ENCODE measurements at regions of chr5 and their contacts with region 1.

Region 1: GRCh38 chr5:157328277-157328912 is 62.5 kb downstream of the CYFIP2 start:
- DNase-seq: peak; percentile 71
- H3K4me3 Mint-ChIP-seq: no peak overlapping the region
- H3K27ac Mint-ChIP-seq: peak overlapping the region; percentile 23
- H3K4me1 Mint-ChIP-seq: peaks cover 40% of the 10 kb centered on the region
- H3K27me3 Mint-ChIP-seq: no peaks in the 10 kb centered on the region

Region 2: GRCh38 chr5:157004893-157005551 is 323.4 kb before region 1 on chr5:
- CTCF ChIA-PET with region 1: no interaction called
- POLR2A ChIA-PET with region 1: no interaction called
- intact Hi-C with region 1: no loop called
- DNase-seq: no peak
- H3K4me3 Mint-ChIP-seq: no peak overlapping the region
- H3K27ac Mint-ChIP-seq: no peak overlapping the region
- H3K4me1 Mint-ChIP-seq: peaks cover 12% of the 10 kb centered on the region
- H3K27me3 Mint-ChIP-seq: no peaks in the 10 kb centered on the region

Region 3: DNA sequence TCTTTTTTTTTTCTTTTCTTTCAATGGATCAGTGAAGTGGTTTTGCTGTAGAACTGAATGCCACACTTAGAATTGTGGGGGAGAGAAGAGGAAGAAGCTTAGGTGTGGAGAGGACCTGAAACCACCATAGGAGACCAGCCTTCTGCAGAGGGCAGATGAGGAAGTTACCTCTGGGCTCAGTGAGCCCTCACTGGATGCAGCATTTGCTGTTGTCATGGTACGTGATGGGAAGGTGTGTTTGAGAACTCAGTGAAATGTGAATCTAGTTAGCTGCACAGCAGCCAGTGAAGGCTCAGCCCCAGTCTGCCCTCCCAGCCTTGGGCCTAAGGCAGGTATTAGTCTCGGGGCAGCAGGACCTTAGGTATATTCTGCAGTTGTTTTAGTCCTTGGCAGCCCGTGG is 45.0 kb before region 1 on chr5:
- CTCF ChIA-PET with region 1: interaction called, 13 read pairs
- POLR2A ChIA-PET with region 1: no interaction called
- intact Hi-C with region 1: no loop called
- DNase-seq: peak; percentile 25
- H3K4me3 Mint-ChIP-seq: no peak overlapping the region
- H3K27ac Mint-ChIP-seq: peak overlapping the region; percentile 77
- H3K4me1 Mint-ChIP-seq: peaks cover 83% of the 10 kb centered on the region
- H3K27me3 Mint-ChIP-seq: no peaks in the 10 kb centered on the region

Region 4: GRCh38 chr5:157312492-157312891 is 15.9 kb before region 1 on chr5:
- CTCF ChIA-PET with region 1: interaction called, 38 read pairs
- POLR2A ChIA-PET with region 1: no interaction called
- intact Hi-C with region 1: no loop called
- DNase-seq: peak; percentile 74
- H3K4me3 Mint-ChIP-seq: no peak overlapping the region
- H3K27ac Mint-ChIP-seq: peak overlapping the region; percentile 82
- H3K4me1 Mint-ChIP-seq: peaks cover 31% of the 10 kb centered on the region
- H3K27me3 Mint-ChIP-seq: no peaks in the 10 kb centered on the region

Region 5: GRCh38 chr5:157390551-157391297 is 62.3 kb after region 1 on chr5:
- CTCF ChIA-PET with region 1: interaction called, 8 read pairs
- POLR2A ChIA-PET with region 1: interaction called, 3 read pairs
- intact Hi-C with region 1: loop called (anchors 2 kb)
- DNase-seq: peak; percentile 91
- H3K4me3 Mint-ChIP-seq: peak overlapping the region; percentile 49
- H3K27ac Mint-ChIP-seq: peak overlapping the region; percentile 98
- H3K4me1 Mint-ChIP-seq: peaks cover 39% of the 10 kb centered on the region
- H3K27me3 Mint-ChIP-seq: no peaks in the 10 kb centered on the region

Region 6: DNA sequence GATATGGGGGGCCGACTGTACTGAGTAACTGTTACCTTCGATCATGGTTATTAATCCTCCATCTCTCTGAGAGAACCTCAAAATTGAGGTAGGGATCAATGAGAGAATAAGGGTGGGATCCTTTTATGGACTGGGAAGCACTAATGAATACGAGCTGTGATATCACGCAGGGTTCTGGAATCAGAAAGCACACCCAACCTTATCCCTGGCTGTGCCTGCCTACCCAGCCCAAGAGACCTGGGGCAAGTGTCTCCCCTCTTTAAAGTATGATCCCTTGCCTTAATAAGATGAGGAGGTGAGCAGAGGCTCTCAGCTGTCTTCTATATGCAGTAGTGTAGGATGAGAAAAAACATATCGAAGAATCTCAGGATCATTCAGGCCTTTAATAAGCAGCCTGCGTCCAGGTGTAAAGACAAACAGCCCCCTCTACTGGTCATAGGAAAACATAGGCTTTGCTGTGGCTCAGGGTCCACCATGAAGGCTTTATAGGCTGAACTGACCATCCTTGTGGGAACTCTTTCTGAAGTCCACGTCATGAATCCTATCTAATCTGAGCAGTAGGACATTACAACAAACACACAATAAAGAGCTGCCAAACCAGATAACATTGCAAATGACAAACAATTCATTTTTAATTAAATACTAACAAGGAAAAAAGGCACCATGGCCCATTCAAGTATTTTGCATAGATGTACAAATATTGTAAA is 148.5 kb after region 1 on chr5:
- CTCF ChIA-PET with region 1: interaction called, 83 read pairs
- POLR2A ChIA-PET with region 1: no interaction called
- intact Hi-C with region 1: loop called (anchors 1 kb)
- DNase-seq: peak; percentile 33
- H3K4me3 Mint-ChIP-seq: no peak overlapping the region
- H3K27ac Mint-ChIP-seq: peak overlapping the region; percentile 40
- H3K4me1 Mint-ChIP-seq: peaks cover 27% of the 10 kb centered on the region
- H3K27me3 Mint-ChIP-seq: no peaks in the 10 kb centered on the region